ENCODE measurements at regions of chr22 and their contacts with region 1.

Region 1: GRCh38 chr22:26364066-26365015 is 64.7 kb upstream of the ASPHD2 start:
- DNase-seq: peak; percentile 79
- ATAC-seq: peak; percentile 96
- H3K4me3 Mint-ChIP-seq: no peak overlapping the region
- H3K27ac Mint-ChIP-seq: no peak overlapping the region
- H3K4me1 Mint-ChIP-seq: peaks cover 3% of the 10 kb centered on the region; the same call in 1 of the 2 replicates
- H3K27me3 Mint-ChIP-seq: peaks cover 5% of the 10 kb centered on the region
- CTCF ChIP-seq: 0 out of 2 replicates have a peak, but pooled peaks have one; percentile 47

Region 2: DNA sequence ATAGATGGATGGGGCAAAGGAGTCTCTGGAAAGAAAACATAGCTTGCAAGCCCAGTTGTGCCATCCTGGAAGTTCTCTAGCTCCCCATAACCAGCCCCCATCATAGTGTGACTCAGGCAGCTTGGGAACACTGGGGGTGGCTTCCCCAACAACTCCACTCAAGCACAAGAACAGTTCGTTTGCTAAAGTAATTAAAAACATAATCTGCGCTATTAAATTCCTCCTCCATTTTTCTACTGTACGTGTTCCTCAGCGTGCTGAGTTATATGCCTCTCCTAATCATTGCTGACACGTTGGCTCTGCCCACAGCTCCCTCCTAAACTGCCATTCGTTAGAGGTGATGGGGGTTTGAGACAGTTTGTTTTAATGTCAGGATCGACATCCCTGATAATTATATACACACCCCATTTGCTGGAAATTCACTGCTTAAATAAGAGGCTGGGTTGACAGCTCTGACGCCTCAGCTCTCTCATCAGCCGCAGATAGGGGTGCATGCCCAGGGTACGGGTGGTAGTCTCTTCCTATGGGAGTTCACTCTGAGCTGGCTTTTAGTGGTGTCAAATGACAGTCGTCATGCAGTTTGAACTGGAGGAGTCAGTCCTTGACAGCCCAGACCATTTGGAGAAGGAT is 254.5 kb before region 1 on chr22:
- CTCF ChIA-PET with region 1: no interaction called
- POLR2A ChIA-PET with region 1: no interaction called
- DNase-seq: no peak
- ATAC-seq: no peak
- H3K4me3 Mint-ChIP-seq: no peak overlapping the region
- H3K27ac Mint-ChIP-seq: no peak overlapping the region
- H3K4me1 Mint-ChIP-seq: 0 out of 2 replicates have a peak, but pooled peaks cover 2% of the 10 kb centered on the region
- H3K27me3 Mint-ChIP-seq: peaks cover 11% of the 10 kb centered on the region
- CTCF ChIP-seq: no peak

Region 3: DNA sequence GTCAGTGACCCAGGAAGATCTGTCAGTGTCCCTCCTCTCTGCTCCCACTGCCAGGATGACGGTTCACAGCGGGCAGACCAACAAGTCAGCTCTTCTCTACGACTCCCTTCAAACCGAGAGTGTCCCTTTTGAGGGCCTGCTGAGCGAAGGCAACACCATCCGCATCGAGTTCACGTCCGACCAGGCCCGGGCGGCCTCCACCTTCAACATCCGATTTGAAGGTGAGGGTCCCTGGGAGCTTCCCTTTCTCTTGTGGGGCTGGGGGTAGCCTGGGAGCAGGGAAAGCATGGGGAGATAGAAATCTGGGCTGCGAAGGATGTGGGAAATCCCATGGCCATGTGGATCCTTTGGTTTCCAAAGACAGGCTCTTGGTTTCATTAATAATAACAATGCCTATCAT is 53.7 kb before region 1 on chr22:
- CTCF ChIA-PET with region 1: no interaction called
- POLR2A ChIA-PET with region 1: no interaction called
- DNase-seq: no peak
- ATAC-seq: no peak
- H3K4me3 Mint-ChIP-seq: no peak overlapping the region
- H3K27ac Mint-ChIP-seq: no peak overlapping the region
- H3K4me1 Mint-ChIP-seq: peaks cover under 1% of the 10 kb centered on the region; the same call in 1 of the 2 replicates
- H3K27me3 Mint-ChIP-seq: peaks cover 4% of the 10 kb centered on the region; the same call in 1 of the 2 replicates
- CTCF ChIP-seq: no peak

Region 4: GRCh38 chr22:26385164-26385563 is 20.8 kb after region 1 on chr22:
- CTCF ChIA-PET with region 1: interaction called, 19 read pairs
- POLR2A ChIA-PET with region 1: no interaction called
- DNase-seq: no peak
- ATAC-seq: no peak
- H3K4me3 Mint-ChIP-seq: no peak overlapping the region
- H3K27ac Mint-ChIP-seq: no peak overlapping the region
- H3K4me1 Mint-ChIP-seq: peaks cover 5% of the 10 kb centered on the region
- H3K27me3 Mint-ChIP-seq: peaks cover 11% of the 10 kb centered on the region
- CTCF ChIP-seq: no peak

Region 5: GRCh38 chr22:26416670-26417250 is 52.4 kb after region 1 on chr22:
- CTCF ChIA-PET with region 1: interaction called, 16 read pairs
- POLR2A ChIA-PET with region 1: no interaction called
- DNase-seq: peak; percentile 58
- ATAC-seq: peak; percentile 90
- H3K4me3 Mint-ChIP-seq: no peak overlapping the region
- H3K27ac Mint-ChIP-seq: no peak overlapping the region
- H3K4me1 Mint-ChIP-seq: peaks cover 24% of the 10 kb centered on the region
- H3K27me3 Mint-ChIP-seq: peaks cover 7% of the 10 kb centered on the region; the same call in 1 of the 2 replicates
- CTCF ChIP-seq: no peak

Region 6: GRCh38 chr22:26436903-26437515 is 72.7 kb after region 1 on chr22:
- CTCF ChIA-PET with region 1: interaction called, 11 read pairs
- POLR2A ChIA-PET with region 1: no interaction called
- DNase-seq: no peak
- ATAC-seq: no peak
- H3K4me3 Mint-ChIP-seq: no peak overlapping the region
- H3K27ac Mint-ChIP-seq: 0 out of 2 replicates have a peak overlapping the region, but pooled peaks have one; percentile 4
- H3K4me1 Mint-ChIP-seq: no peaks in the 10 kb centered on the region
- H3K27me3 Mint-ChIP-seq: no peaks in the 10 kb centered on the region
- CTCF ChIP-seq: no peak

Region 7: GRCh38 chr22:26461188-26461810 is 97.0 kb after region 1 on chr22:
- CTCF ChIA-PET with region 1: interaction called, 69 read pairs
- POLR2A ChIA-PET with region 1: no interaction called
- DNase-seq: peak; percentile 88
- ATAC-seq: peak; percentile 99
- H3K4me3 Mint-ChIP-seq: no peak overlapping the region
- H3K27ac Mint-ChIP-seq: peak overlapping the region; percentile 84; the same call in 1 of the 2 replicates
- H3K4me1 Mint-ChIP-seq: peaks cover 4% of the 10 kb centered on the region; the same call in 1 of the 2 replicates
- H3K27me3 Mint-ChIP-seq: no peaks in the 10 kb centered on the region
- CTCF ChIP-seq: peak; percentile 57; the same call in 1 of the 2 replicates

Measured in WTC11 (cell line).